Left cardiac atrium (tissue), 4 donors: ENCODE measurements at regions of chr1 and their contacts with region 1.

Region 1: DNA sequence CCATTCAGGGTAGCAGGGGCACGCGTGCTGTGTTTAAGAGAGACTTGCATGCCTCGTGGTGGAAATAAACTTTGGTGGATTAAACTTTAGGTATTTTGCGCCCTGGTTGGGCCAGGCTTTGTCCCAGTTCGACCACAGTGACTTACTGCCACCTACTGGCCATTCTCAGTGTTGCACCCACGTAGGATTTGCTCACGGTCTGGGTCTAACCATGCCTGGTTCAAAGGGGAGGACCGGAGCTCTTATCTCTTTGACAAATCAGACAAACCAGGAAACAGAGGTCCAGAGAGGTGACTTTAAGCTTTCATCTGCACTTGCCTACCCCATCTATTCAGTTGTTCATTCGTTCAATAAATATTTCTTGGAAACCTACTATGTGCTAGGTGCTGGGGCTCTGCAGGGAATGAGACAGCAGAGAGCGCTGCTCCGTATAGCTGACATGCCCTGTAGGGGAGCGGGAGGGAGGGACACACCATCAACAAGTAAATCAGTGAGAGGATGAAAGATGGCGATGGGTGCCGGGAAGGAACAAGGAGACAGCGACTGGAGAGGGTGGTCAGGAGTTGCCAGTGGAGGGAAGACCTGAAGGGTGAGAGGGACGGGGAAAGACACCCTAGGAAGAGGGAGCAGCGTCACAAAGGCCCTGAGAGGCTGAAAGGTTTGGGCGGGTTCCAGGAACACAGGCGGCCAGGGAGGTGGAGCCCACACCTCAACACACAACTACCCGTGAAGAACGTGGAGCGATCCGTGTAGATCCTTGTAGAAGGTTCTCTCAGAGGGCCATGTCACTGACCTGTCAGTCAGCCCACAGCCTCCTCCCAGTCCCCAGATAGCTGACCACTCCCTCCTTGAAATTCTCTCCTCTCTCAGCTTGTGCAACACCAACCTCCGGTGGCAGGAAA is 27.2 kb upstream of the TINAGL1 start:
- DNase-seq: peak; percentile 81
- ATAC-seq: peak; percentile 94 to 96

Region 2: DNA sequence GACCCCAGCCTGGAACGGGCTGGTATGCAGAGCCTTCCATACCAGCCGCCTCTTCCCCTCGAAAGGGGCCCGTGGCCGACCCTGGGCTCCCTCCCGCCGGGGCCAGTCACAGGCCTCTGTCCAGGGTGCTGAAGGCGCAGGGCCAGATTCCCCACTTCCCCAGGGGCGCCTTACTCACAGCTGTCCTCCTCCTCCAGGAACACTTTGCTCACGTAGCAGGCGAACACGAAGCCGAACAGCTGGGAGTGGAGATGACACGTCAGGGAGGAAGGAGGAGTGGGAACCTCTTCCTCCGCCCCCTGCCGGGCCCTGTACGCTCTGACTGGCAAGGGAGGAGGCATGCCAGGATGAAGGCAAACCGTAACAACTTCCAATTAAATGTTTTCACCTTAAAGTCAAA is 366.8 kb before region 1 on chr1:
- intact Hi-C with region 1: loop called in 1 of 2 experiments (anchors 5 kb)
- DNase-seq: peak; percentile 81
- ATAC-seq: peak; percentile 92 to 96

Region 3: DNA sequence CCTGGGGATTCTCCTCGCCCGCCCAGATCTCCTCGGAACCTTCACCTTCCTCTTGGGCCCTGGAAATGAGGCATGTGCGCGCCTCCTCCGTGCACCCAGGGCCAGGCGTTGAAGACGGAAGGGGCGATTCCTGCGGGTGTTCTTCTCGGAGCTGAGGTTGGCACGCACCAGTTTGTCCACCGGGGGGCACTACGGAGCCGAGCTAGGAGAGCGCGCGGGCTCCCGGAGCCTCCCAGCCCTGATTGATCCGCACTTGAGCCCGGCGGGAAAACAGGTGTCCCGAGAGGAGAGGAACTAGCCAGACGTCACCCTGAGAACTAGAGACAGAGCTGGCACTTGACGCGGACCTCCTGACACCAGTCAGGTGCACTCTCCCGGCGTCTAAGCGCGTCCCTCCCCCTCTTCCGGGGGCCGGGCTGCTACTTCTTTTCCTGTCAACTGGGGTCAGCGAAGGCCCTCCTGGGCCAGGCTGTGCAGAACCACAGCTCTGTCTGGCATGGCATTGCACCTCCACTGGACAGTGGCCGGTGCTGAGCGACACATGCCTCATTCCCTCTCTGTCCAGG is 154.4 kb before region 1 on chr1:
- intact Hi-C with region 1: loop called in 1 of 2 experiments (anchors 5 kb)
- DNase-seq: peak; percentile 84
- ATAC-seq: peak; percentile 91 to 96

Region 4: GRCh38 chr1:31422505-31423319 is 126.4 kb before region 1 on chr1:
- intact Hi-C with region 1: loop called in 1 of 2 experiments (anchors 10 kb)
- DNase-seq: peak; percentile 62
- ATAC-seq: peak; percentile 81 to 92

Region 5: GRCh38 chr1:31458287-31458891 is 90.8 kb before region 1 on chr1:
- intact Hi-C with region 1: loop called in 1 of 2 experiments (anchors 10 kb)
- DNase-seq: no peak
- ATAC-seq: no peak

Region 6: DNA sequence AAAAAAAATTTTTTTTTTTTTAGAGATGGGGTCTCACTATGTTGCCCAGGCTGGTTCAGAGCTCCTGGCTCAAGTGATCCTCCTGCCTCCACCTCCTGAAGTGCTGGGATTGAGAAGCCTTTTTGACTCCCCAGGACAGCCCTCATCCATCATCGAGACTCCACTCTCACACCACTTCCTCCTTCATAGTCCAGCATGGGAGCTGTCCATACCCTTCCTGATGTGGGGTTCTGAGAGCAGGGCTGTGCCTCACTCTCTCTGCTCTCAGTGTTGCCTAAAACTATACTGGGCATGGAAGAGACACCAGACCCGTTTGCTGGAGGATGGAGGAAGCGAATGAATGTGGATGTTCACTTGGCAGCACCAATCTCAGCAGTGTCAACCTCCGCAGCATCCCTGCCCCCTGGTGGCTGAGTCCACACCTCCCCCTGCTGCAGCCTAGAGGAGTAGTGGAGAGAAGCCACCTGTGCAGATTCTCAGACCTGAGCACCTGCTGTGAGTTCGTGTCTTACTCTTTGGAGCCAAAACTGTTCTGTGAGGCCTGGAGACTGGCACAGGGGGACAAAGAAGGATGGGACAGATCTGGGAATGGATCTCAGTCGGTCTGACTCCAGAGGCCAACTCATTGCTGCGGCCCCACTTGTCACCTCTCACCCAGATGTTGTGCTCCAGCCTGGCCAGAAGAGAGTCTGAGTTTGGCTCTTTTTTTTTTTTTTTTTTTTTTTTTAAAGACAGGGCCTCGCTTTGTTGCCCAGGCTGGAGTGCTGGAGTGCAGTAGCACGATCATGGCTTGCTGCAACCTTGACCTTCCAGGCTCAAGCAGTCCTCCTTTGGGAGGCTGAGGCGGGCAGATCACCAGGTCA is 44.8 kb after region 1 on chr1:
- intact Hi-C with region 1: no loop called
- DNase-seq: peak; percentile 87
- ATAC-seq: peak; percentile 84 to 87

Region 7: GRCh38 chr1:32052887-32053286 is 503.7 kb after region 1 on chr1:
- intact Hi-C with region 1: no loop called
- DNase-seq: no peak
- ATAC-seq: no peak

Region 8: DNA sequence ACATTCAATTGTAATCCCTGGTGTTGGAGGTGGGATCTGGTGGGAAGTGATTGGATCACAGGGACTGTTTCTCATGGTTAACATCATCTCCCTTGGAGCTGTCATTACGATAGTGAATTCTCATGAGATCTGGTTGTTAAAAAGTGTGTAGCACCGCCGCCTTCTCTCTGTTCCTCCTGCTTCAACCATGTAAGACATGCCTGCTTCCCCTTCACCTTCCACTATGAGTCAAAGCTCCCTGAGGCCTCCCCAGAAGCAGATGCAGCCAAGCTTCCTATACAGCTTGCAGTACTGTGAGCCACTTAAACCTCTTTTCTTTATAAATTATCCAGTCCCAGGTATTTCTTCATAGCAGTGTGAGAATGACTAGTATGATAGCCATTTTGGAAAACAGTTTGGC is 1662.8 kb after region 1 on chr1:
- intact Hi-C with region 1: no loop called
- DNase-seq: no peak
- ATAC-seq: no peak